IMR-90 (cell line): ENCODE measurements at regions of chr4 and their contacts with region 1.

Region 1: DNA sequence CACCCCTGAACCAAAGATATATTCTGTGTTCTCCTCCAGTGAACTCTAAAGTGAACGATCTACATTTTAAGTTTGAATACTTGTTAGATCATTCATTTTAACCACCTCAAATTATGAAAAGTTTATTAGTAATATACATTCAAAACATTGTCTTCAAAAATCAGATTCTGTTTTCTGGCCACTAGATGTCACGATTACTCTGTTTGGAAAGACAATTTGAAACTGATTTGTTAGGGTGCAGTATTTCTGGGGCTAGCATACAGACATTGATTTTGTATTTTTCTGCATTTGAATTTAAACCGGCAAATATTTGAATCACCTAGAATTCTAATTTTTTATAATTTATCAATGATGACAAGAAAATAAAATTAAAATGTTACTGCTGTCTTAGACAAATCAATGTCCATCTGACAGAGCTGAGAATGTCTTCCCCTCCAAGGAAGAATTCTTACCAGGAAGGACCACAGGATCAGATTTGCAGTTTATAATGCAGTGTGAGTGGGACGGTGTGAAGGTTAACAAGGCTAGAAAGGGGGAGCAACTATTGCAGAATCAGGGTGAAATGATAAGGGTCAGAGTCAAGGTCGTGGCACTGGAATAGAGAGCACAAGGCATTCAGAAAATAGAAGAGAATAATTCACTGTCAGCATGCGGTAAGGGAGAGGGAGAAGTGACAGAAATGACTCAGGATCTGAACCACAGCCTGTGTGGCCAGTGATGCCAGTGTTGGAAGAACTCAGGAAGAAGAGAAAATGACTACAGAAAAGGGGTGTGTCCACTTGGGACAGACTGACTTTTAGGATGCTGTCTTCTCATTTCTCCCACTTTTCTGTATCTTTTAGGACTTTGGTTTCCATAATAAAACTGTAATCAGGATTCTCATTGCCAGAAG is 91.6 kb downstream of the ANXA10 start:
- DNase-seq: peak; percentile 59
- ATAC-seq: peak; percentile 61
- H3K4me3 ChIP-seq: no peak overlapping the region
- H3K27ac ChIP-seq: no peak overlapping the region
- H3K4me1 ChIP-seq: no peaks in the 10 kb centered on the region
- H3K27me3 ChIP-seq: no peaks in the 10 kb centered on the region
- CTCF ChIP-seq: peak; percentile 66
- POLR2A ChIP-seq: no peak
- RAD21 ChIP-seq: peak; percentile 80

Region 2: GRCh38 chr4:168480931-168481611 is 297.1 kb after region 1 on chr4:
- CTCF ChIA-PET with region 1: no interaction called
- POLR2A ChIA-PET with region 1: no interaction called
- dilution Hi-C with region 1: no loop called
- in situ Hi-C with region 1: no loop called
- intact Hi-C with region 1: loop called (anchors 10 kb)
- DNase-seq: peak; percentile 85
- ATAC-seq: peak; percentile 21; the same call in 1 of the 2 replicates
- H3K4me3 ChIP-seq: peak overlapping the region; percentile 62
- H3K27ac ChIP-seq: peak overlapping the region; percentile 80
- H3K4me1 ChIP-seq: peaks cover 10% of the 10 kb centered on the region
- H3K27me3 ChIP-seq: no peaks in the 10 kb centered on the region
- CTCF ChIP-seq: no peak
- POLR2A ChIP-seq: no peak
- RAD21 ChIP-seq: no peak

Region 3: GRCh38 chr4:168631241-168632162 is 447.5 kb after region 1 on chr4:
- CTCF ChIA-PET with region 1: no interaction called
- POLR2A ChIA-PET with region 1: no interaction called
- dilution Hi-C with region 1: no loop called
- in situ Hi-C with region 1: no loop called
- intact Hi-C with region 1: loop called (anchors 5 kb)
- DNase-seq: peak; percentile 55
- ATAC-seq: peak; percentile 78
- H3K4me3 ChIP-seq: peak overlapping the region; percentile 54
- H3K27ac ChIP-seq: peak overlapping the region; percentile 59
- H3K4me1 ChIP-seq: peaks cover 18% of the 10 kb centered on the region
- H3K27me3 ChIP-seq: no peaks in the 10 kb centered on the region
- CTCF ChIP-seq: peak; percentile 45
- POLR2A ChIP-seq: no peak
- RAD21 ChIP-seq: peak; percentile 50

Region 4: DNA sequence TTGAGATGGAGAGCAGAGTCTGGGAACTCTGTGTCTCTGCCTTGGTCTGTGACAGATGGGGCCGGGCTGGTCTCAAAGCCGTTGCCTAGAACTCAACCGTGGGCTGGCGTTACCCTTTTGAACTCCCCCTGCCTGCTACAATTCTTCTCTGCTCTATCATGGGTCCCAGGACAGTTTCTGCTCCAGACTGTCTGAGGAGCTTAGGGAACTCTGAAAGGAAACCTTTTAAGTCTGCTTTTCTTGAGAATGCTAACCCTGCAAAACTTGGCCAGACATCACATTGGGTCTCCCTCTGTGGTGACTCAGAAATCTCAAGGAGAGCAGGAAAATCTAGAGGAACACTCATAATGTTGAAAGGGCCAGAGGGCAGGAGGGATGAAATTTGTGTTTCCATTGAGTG is 585.5 kb after region 1 on chr4:
- CTCF ChIA-PET with region 1: no interaction called
- POLR2A ChIA-PET with region 1: no interaction called
- dilution Hi-C with region 1: no loop called
- in situ Hi-C with region 1: no loop called
- intact Hi-C with region 1: no loop called
- DNase-seq: peak; percentile 80
- ATAC-seq: no peak
- H3K4me3 ChIP-seq: no peak overlapping the region
- H3K27ac ChIP-seq: no peak overlapping the region
- H3K4me1 ChIP-seq: peaks cover 24% of the 10 kb centered on the region
- H3K27me3 ChIP-seq: no peaks in the 10 kb centered on the region
- CTCF ChIP-seq: no peak
- POLR2A ChIP-seq: no peak
- RAD21 ChIP-seq: no peak

Region 5: GRCh38 chr4:168831919-168832762 is 648.2 kb after region 1 on chr4:
- CTCF ChIA-PET with region 1: no interaction called
- POLR2A ChIA-PET with region 1: no interaction called
- dilution Hi-C with region 1: no loop called
- in situ Hi-C with region 1: no loop called
- intact Hi-C with region 1: loop called (anchors 10 kb)
- DNase-seq: peak; percentile 78
- ATAC-seq: peak; percentile 73
- H3K4me3 ChIP-seq: peak overlapping the region; percentile 81
- H3K27ac ChIP-seq: peak overlapping the region; percentile 98
- H3K4me1 ChIP-seq: peaks cover 8% of the 10 kb centered on the region
- H3K27me3 ChIP-seq: no peaks in the 10 kb centered on the region
- CTCF ChIP-seq: no peak
- POLR2A ChIP-seq: peak; percentile 99
- RAD21 ChIP-seq: peak; percentile 7; the same call in 1 of the 2 replicates

Region 6: GRCh38 chr4:169179609-169180521 is 995.9 kb after region 1 on chr4:
- CTCF ChIA-PET with region 1: no interaction called
- POLR2A ChIA-PET with region 1: no interaction called
- dilution Hi-C with region 1: no loop called
- in situ Hi-C with region 1: no loop called
- intact Hi-C with region 1: no loop called
- DNase-seq: peak; percentile 40
- ATAC-seq: peak; percentile 45
- H3K4me3 ChIP-seq: no peak overlapping the region
- H3K27ac ChIP-seq: peak overlapping the region; percentile 23; the same call in 1 of the 2 replicates
- H3K4me1 ChIP-seq: peaks cover 8% of the 10 kb centered on the region
- H3K27me3 ChIP-seq: no peaks in the 10 kb centered on the region
- CTCF ChIP-seq: no peak
- POLR2A ChIP-seq: no peak
- RAD21 ChIP-seq: no peak

Region 7: DNA sequence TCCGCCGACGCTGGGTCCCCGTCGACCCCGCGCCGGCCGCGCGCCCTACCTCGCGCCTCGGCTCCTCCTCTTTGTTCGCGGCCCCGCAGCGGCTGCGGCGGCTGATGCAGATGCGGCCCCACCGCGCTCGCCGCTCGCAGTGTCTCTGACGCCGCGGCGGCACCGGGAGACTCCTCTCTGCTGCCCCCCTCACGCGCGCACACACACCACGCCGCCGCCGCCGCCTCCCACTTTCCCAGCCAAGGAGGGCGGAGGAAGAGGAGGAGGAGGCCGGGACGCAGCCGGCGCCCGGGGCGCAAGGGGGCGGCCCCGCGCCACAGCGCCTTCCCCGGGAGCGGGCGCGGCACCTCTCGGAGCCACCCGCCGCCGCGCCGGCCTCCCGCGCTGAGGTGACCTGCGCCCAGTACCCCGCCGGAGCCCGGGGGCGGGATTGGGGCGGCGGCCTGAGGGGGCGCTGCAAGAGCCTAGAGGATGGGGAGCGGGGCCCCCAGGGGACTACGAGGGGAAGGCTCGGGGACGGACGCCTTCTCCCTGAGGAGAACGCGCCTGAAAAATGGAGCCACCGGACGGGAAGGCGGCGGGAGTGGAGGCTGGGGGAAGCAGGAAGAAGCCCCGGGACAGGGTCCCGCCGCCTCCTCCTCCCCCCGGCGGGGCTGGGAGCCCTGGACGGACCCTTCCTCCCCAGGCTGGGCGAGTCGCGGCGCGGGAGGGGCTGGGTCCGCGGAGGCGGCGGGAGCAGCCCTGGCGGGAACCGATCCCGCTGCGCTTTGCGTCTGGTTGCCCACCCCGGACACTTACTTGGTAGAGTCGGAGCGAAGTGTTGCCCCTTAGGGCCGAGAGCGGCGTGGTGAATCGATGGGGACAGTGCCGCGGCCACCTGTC is 1087.1 kb after region 1 on chr4 and contains the start of gene SH3RF1:
- CTCF ChIA-PET with region 1: no interaction called
- POLR2A ChIA-PET with region 1: no interaction called
- dilution Hi-C with region 1: no loop called
- in situ Hi-C with region 1: no loop called
- intact Hi-C with region 1: loop called (anchors 10 kb)
- DNase-seq: peak; percentile 82
- ATAC-seq: peak; percentile 88
- H3K4me3 ChIP-seq: peak within 1 kb of the TSS; percentile 94
- H3K27ac ChIP-seq: peak within 1 kb of the TSS; percentile 84
- H3K4me1 ChIP-seq: peaks cover 9% of the 10 kb centered on the region
- H3K27me3 ChIP-seq: no peaks in the 10 kb centered on the region
- CTCF ChIP-seq: peak; percentile 45
- POLR2A ChIP-seq: peak; percentile 95
- RAD21 ChIP-seq: peak; percentile 53
- total RNA-seq, gene SH3RF1: 29.8 and 30.0 TPM in 2 replicates